HAP-1 (cell line): ENCODE measurements at regions of chr12 and their contacts with region 1.

Region 1: DNA sequence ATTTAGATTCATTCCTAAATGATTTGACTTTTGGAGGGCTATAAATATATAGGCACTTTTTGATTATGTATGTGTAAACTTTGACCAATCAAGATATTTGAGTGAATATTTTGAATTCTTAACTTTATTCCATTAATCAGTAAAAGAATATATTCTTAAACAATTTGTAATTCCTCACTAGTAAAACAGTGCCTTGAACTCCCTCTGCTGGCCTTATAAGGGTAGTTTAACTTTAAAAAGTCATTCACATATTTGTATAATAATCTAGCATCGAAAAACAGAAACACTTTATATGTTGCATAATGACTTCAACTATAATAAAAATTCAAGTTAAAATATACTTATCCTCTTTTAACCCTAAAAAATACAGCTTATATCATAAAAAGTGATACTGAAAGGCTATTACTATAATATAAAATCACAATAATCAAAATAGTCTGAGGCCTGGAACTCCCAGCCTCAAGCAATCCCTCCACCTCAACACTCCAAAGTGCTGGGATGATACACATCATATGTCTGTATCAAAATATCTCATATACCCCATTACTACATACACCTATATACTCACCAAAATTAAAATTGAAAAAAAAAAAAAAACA is 31.2 kb downstream of the CCDC59 start:
- DNase-seq: peak in 1 of 2 experiments; percentile 68
- H3K4me3 ChIP-seq: no peak overlapping the region
- H3K4me1 ChIP-seq: peaks cover 36% of the 10 kb centered on the region
- H3K27me3 ChIP-seq: no peaks in the 10 kb centered on the region

Region 2: DNA sequence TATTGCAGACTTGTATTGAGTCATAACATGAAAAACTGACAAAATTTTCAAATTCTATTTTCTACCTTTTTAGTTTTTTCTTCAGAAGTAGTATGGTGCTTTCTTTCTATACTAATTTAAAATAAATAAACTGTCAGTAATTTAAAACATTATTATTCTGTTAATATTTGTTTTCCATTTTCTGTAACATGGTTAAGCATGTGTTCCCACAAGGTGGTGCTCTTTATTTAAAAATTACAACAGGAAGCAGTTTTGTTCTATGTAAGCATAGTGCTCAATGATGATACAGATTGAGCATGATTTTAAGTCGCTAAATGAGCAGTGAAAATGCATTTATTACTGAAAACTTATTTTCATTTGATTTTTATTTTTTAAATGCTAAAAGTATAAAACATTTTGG is 682.5 kb before region 1 on chr12:
- in situ Hi-C with region 1: loop called (anchors 10 kb)
- DNase-seq: peak in 1 of 2 experiments; percentile 80
- H3K4me3 ChIP-seq: no peak overlapping the region
- H3K4me1 ChIP-seq: 0 out of 2 replicates have a peak, but pooled peaks cover 2% of the 10 kb centered on the region
- H3K27me3 ChIP-seq: no peaks in the 10 kb centered on the region

Region 3: GRCh38 chr12:82638324-82638723 is 311.3 kb after region 1 on chr12:
- in situ Hi-C with region 1: no loop called
- DNase-seq: no peak
- H3K4me3 ChIP-seq: no peak overlapping the region
- H3K4me1 ChIP-seq: no peaks in the 10 kb centered on the region
- H3K27me3 ChIP-seq: no peaks in the 10 kb centered on the region

Region 4: DNA sequence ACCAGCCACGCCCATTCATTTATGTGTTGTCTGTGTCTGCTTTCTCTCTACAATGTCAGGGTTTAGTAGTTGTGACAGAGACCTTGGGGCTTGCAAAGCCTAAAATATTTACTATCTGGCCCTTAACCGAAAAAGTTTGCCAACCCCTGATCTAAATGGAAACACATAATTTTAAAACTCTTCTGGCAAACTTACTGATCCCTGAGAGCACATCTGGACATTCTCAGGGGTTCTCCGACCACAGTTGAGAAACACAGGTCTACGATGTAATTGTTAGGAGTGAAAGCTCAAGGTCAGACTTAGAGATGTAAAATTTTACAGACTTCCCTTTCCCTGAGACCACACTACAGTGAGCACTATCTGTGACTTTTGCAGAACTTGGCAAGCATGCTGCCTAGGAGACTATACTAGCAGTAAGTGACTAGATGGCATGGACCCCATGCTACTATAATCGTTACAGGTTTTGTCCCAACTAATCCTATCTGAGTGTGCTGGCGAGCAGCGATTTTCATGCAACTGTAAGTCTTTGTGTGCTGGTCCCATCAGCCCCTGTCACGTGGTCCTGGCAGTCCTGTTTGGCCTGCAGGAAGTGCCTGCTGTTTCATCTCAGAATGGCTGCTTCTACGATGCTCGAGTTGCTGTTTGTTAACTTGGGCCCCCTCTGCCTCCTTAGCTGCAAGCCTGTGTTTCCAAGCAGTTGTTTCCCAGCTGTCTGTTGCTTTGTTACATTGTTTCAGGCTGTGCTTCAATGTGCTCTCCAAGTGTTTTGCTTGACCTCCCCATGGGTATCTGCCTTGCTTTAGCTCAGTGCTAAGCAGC is 381.3 kb after region 1 on chr12:
- in situ Hi-C with region 1: no loop called
- DNase-seq: no peak
- H3K4me3 ChIP-seq: no peak overlapping the region
- H3K4me1 ChIP-seq: peaks cover 9% of the 10 kb centered on the region
- H3K27me3 ChIP-seq: no peaks in the 10 kb centered on the region